ENCODE measurements at regions of chr19 and their contacts with region 1.

Region 1: GRCh38 chr19:36014029-36014924 is at the start of gene ALKBH6:
- DNase-seq: peak; percentile 100
- H3K4me3 Mint-ChIP-seq: peak within 1 kb of the TSS; percentile 97
- H3K27ac Mint-ChIP-seq: peak within 1 kb of the TSS; percentile 94
- H3K4me1 Mint-ChIP-seq: peaks cover 27% of the 10 kb centered on the region
- H3K27me3 Mint-ChIP-seq: no peaks in the 10 kb centered on the region
- total RNA-seq, gene ALKBH6: 36.9 to 37.8 TPM

Region 2: GRCh38 chr19:35740423-35741202 is 273.7 kb before region 1 on chr19:
- CTCF ChIA-PET with region 1: no interaction called
- intact Hi-C with region 1: loop called (anchors 1 kb)
- DNase-seq: peak; percentile 99
- H3K4me3 Mint-ChIP-seq: peak overlapping the region; percentile 89
- H3K27ac Mint-ChIP-seq: peak overlapping the region; percentile 97
- H3K4me1 Mint-ChIP-seq: peaks cover 41% of the 10 kb centered on the region
- H3K27me3 Mint-ChIP-seq: no peaks in the 10 kb centered on the region

Region 3: GRCh38 chr19:35757749-35758608 is 256.3 kb before region 1 on chr19 and contains the start of gene PROSER3:
- CTCF ChIA-PET with region 1: no interaction called
- intact Hi-C with region 1: loop called (anchors 1 kb)
- DNase-seq: peak; percentile 99
- H3K4me3 Mint-ChIP-seq: peak within 1 kb of the TSS; percentile 90
- H3K27ac Mint-ChIP-seq: peak within 1 kb of the TSS; percentile 92
- H3K4me1 Mint-ChIP-seq: peaks cover 20% of the 10 kb centered on the region
- H3K27me3 Mint-ChIP-seq: peaks cover 8% of the 10 kb centered on the region
- total RNA-seq, gene PROSER3: 45.3 to 47.4 TPM

Region 4: GRCh38 chr19:36054119-36054732 is 39.9 kb after region 1 on chr19 and contains the start of gene THAP8:
- CTCF ChIA-PET with region 1: no interaction called
- intact Hi-C with region 1: loop called (anchors 1 kb)
- DNase-seq: peak; percentile 100
- H3K4me3 Mint-ChIP-seq: peak within 1 kb of the TSS; percentile 94
- H3K27ac Mint-ChIP-seq: peak within 1 kb of the TSS; percentile 98
- H3K4me1 Mint-ChIP-seq: peaks cover 18% of the 10 kb centered on the region
- H3K27me3 Mint-ChIP-seq: no peaks in the 10 kb centered on the region
- total RNA-seq, gene THAP8: 1.1 to 1.2 TPM

Region 5: DNA sequence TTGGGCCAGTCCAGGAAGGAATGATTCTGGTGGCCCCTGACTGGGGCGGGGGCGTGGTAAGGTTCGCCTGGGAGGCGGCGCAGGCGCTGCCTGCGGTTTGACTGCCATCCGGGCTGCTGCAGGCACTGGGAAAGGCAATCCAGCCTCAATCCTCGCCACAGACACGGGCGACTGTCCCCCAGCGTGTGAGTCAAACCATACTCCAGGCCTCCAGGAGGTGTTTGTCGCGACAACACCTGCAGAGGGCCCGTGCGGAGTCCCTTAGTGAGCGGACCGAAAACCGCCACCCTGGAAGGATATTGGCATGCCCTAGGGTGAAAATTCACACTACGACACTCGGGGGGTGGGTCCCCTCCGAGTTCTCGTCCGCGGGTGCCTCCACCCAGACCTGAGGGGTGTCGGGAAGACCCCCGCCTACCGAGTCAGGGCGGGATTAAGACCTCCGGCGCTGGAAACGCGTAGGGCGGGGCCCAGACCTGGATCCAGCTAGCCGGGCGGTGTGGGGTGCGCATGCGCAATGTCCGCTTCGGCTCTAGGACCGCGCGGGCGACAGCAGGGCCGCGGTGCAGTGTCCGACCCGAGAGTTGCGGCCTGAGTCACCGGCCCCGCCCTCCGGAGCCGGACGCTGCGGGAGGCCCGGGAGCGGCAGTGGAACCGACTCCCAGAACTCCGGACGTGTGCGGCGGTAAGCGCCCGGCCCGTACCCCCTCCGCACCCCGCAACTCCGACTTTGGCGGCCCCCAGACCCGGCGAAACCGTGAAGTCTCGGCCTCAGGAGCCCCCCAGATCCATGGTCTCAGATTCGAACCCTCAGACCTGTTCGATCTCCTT is 125.4 kb after region 1 on chr19 and contains the start of gene CAPNS1:
- CTCF ChIA-PET with region 1: no interaction called
- intact Hi-C with region 1: loop called (anchors 1 kb)
- DNase-seq: peak; percentile 92
- H3K4me3 Mint-ChIP-seq: peak within 1 kb of the TSS; percentile 90
- H3K27ac Mint-ChIP-seq: peak within 1 kb of the TSS; percentile 94
- H3K4me1 Mint-ChIP-seq: peaks cover 17% of the 10 kb centered on the region
- H3K27me3 Mint-ChIP-seq: no peaks in the 10 kb centered on the region
- total RNA-seq, gene CAPNS1: 301 to 307 TPM

Region 6: GRCh38 chr19:36638862-36639510 is 624.7 kb after region 1 on chr19:
- CTCF ChIA-PET with region 1: no interaction called
- intact Hi-C with region 1: no loop called
- DNase-seq: no peak
- H3K4me3 Mint-ChIP-seq: no peak overlapping the region
- H3K27ac Mint-ChIP-seq: no peak overlapping the region
- H3K4me1 Mint-ChIP-seq: no peaks in the 10 kb centered on the region
- H3K27me3 Mint-ChIP-seq: no peaks in the 10 kb centered on the region